ENCODE measurements at regions of chr20 and their contacts with region 1.

Region 1: DNA sequence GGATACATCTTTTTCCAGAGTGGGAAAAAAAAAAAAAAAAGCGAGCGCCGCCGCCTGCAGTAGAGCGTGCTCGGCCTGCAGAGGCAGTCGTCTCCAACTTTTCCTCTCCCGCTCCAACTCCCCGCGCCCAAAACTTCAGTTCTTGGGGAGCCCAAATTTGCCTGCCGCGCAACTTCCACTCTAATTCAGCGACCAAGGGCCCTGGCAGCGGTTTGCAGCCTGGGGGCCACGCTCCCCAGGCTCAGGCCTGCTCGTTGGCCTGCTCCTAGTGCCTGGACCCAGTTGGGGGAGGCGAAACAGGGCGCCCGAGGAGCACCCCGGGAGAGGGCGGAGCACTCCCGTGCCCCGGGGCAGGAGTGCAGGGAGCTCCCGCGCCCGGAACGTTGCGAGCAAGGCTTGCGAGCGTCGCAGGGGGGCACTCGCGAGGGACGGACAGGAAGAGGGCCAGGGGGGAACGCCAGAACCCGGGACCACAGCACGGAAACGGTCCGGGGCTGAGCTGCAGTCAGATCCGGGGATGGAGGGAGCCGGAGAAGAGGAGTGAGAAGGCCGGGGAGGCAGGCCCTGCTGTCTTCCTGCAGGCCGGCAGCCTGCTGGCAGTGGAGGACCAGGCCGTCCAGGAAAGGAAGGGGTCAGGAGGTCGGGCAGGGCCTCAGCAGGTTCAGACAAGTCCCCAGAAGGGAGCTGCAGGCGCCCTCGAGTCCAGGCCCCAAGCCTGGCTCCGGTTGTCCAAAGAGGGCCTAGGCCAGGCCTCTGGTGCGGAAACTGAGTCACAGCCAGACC is at the start of gene STX16:
- DNase-seq: peak; percentile 84
- H3K4me3 Mint-ChIP-seq: peak within 1 kb of the TSS; percentile 94
- H3K27ac Mint-ChIP-seq: peak within 1 kb of the TSS; percentile 97
- H3K4me1 Mint-ChIP-seq: peaks cover 25% of the 10 kb centered on the region
- H3K27me3 Mint-ChIP-seq: peaks cover 3% of the 10 kb centered on the region
- total RNA-seq, gene STX16: 99.9 and 102 TPM in 2 replicates

Region 2: DNA sequence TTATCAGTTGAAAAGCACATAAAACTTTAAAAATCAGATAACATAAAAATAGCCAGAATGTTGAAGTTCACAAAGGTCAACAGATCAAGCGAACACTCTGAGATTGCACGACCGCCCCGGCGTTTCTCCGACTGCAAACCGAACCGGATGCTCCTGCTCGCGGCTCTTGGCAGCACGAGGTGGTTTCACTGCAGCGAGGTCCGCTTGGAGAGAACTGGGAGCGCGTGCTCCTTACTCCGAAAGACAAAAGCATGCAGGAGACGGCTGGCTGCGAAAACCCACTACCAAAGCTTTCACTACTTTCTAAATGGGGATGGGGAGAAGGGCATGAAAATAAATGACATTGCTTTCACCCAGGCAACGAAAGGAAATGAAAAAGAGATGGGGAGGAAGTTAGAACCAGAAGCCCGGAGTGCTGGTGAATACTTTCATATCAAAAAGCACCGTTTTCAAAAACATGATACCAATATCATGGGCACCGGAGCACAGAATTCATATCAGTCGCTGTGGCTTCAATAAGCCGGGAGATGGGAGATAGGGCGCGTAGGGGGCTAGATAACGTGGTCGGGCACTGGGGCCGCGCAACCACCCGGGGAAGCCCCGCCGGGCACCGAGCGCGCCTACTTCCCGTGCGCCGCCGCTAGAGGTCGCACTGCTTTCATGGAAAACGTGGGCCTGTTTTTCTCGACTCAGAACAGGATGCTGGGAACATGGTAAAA is 414.2 kb before region 1 on chr20:
- intact Hi-C with region 1: loop called (anchors 2 kb)
- DNase-seq: peak; percentile 79
- H3K4me3 Mint-ChIP-seq: peak overlapping the region; percentile 83
- H3K27ac Mint-ChIP-seq: peak overlapping the region; percentile 84
- H3K4me1 Mint-ChIP-seq: peaks cover 30% of the 10 kb centered on the region
- H3K27me3 Mint-ChIP-seq: no peaks in the 10 kb centered on the region

Region 3: GRCh38 chr20:58251921-58252591 is 398.9 kb before region 1 on chr20:
- intact Hi-C with region 1: no loop called
- DNase-seq: no peak
- H3K4me3 Mint-ChIP-seq: no peak overlapping the region
- H3K27ac Mint-ChIP-seq: peak overlapping the region; percentile 36
- H3K4me1 Mint-ChIP-seq: peaks cover 43% of the 10 kb centered on the region
- H3K27me3 Mint-ChIP-seq: no peaks in the 10 kb centered on the region

Region 4: DNA sequence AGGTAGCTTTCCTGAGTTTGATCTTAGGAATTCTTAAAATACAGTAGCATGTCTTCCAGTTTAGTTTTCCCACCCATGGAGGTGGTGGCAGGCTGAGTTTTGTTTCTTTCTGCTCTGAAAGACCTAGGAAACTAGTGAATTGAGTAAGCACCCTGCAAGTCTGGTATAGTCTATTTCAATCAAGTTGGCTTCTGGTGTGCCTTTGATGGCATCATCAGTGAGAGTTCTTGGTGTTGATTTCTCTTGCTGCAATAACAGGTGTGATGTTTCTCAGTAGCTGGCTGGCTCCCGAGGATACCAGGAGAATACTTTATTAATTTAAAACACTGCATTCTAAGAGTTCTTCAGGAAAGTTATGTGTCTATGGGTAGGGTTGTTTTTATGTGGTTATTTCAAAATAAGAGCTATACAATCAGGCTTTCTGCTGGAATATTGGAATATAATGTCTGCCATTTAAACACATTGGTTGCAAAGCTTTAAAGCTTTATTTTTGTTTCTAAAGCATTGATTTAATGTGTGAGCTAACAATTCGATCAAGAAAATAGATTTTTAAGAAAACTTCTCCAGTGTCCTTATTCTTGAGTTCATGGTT is 242.9 kb before region 1 on chr20:
- intact Hi-C with region 1: loop called (anchors 5 kb)
- DNase-seq: peak; percentile 11
- H3K4me3 Mint-ChIP-seq: peak overlapping the region; percentile 65
- H3K27ac Mint-ChIP-seq: peak overlapping the region; percentile 87
- H3K4me1 Mint-ChIP-seq: peaks cover 36% of the 10 kb centered on the region
- H3K27me3 Mint-ChIP-seq: no peaks in the 10 kb centered on the region

Region 5: GRCh38 chr20:58665606-58666005 is 14.6 kb after region 1 on chr20:
- intact Hi-C with region 1: loop called (anchors 1 kb)
- DNase-seq: no peak
- H3K4me3 Mint-ChIP-seq: no peak overlapping the region
- H3K27ac Mint-ChIP-seq: no peak overlapping the region
- H3K4me1 Mint-ChIP-seq: peaks cover 56% of the 10 kb centered on the region
- H3K27me3 Mint-ChIP-seq: no peaks in the 10 kb centered on the region

Region 6: DNA sequence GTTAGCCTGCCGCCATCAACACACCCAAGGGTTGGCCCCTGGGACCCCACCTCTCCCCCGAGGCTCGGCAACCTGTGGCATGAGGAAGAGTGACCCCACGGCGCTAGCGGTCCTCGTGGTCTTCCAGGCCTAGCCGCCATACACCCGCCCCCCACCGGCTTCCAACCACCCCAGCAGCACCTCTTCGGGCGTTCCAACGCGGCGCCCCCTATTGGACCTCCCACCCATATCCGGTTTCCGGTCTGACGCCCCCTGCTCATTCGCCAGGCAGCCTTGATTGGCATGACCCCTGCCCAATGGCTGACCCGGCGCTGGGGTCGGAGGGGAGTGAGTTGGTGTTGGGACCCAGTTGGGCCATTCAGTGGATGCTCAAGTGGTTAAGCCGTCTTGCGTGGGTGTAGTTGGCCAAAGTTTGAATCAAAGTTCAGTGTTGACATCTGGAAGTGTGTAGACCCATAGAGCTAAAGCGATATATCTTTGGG is 199.8 kb after region 1 on chr20 and contains the start of gene GNAS-AS1:
- intact Hi-C with region 1: loop called (anchors 1 kb)
- DNase-seq: peak; percentile 75
- H3K4me3 Mint-ChIP-seq: peak within 1 kb of the TSS; percentile 87
- H3K27ac Mint-ChIP-seq: no peak within 1 kb of the TSS
- H3K4me1 Mint-ChIP-seq: peaks cover 38% of the 10 kb centered on the region
- H3K27me3 Mint-ChIP-seq: peaks cover 50% of the 10 kb centered on the region
- total RNA-seq, gene GNAS-AS1: 1.4 and 1.7 TPM in 2 replicates

Region 7: DNA sequence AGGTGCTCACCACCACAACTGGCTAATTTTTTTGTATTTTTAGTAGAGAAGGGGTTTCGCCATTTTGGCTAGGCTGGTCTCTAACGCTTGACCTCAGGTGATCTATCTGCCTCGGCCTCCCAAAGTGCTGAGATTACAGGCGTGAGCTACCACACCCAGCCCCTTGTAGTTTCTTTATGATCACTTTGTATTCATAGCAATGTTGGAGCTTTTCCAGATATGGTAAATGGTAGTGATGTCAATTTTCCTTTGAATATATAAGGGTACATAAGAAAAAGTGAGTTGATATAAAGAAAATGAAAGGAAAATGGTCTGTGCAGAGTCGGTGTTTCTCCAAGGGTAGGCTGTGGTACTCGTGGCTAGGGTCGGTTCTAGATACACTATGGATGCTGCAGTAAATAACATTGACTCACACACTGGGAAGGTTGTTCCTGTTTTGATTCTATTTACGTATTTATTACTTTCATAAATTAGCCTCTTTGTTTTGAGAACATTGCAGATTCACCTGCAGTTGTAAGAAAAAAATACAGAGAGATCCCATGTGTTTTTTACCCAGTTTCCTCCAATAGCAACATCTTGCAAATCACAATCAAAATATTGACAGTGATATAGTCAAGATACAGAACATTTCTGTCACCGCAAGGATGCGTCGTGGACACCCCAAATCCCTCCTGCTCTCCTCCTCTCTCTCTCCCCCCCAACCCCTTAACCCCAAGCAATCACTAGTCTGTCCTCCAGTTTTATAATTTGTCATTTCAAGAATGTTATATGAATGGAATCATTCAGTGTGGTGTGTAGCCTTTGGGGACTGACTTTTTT is 515.1 kb after region 1 on chr20:
- intact Hi-C with region 1: loop called (anchors 5 kb)
- DNase-seq: no peak
- H3K4me3 Mint-ChIP-seq: peak overlapping the region; percentile 88
- H3K27ac Mint-ChIP-seq: peak overlapping the region; percentile 98
- H3K4me1 Mint-ChIP-seq: peaks cover 88% of the 10 kb centered on the region
- H3K27me3 Mint-ChIP-seq: no peaks in the 10 kb centered on the region

Region 8: GRCh38 chr20:59273739-59274357 is 622.9 kb after region 1 on chr20:
- intact Hi-C with region 1: no loop called
- DNase-seq: no peak
- H3K4me3 Mint-ChIP-seq: no peak overlapping the region
- H3K27ac Mint-ChIP-seq: no peak overlapping the region
- H3K4me1 Mint-ChIP-seq: peaks cover 24% of the 10 kb centered on the region
- H3K27me3 Mint-ChIP-seq: peaks cover 20% of the 10 kb centered on the region